Activated CD4-positive, alpha-beta memory T cell treated with anti-CD3 and anti-CD28 coated beads for 36 hours (primary cell): ENCODE measurements at regions of chr10 and their contacts with region 1.

Region 1: GRCh38 chr10:6202684-6203330 is at the start of gene PFKFB3:
- DNase-seq: peak; percentile 96
- H3K4me3 Mint-ChIP-seq: peak within 1 kb of the TSS; percentile 90
- H3K27ac Mint-ChIP-seq: peak within 1 kb of the TSS; percentile 91
- H3K4me1 Mint-ChIP-seq: peaks cover 32% of the 10 kb centered on the region
- H3K27me3 Mint-ChIP-seq: no peaks in the 10 kb centered on the region
- total RNA-seq, gene PFKFB3: 70.6 to 76.4 TPM

Region 2: DNA sequence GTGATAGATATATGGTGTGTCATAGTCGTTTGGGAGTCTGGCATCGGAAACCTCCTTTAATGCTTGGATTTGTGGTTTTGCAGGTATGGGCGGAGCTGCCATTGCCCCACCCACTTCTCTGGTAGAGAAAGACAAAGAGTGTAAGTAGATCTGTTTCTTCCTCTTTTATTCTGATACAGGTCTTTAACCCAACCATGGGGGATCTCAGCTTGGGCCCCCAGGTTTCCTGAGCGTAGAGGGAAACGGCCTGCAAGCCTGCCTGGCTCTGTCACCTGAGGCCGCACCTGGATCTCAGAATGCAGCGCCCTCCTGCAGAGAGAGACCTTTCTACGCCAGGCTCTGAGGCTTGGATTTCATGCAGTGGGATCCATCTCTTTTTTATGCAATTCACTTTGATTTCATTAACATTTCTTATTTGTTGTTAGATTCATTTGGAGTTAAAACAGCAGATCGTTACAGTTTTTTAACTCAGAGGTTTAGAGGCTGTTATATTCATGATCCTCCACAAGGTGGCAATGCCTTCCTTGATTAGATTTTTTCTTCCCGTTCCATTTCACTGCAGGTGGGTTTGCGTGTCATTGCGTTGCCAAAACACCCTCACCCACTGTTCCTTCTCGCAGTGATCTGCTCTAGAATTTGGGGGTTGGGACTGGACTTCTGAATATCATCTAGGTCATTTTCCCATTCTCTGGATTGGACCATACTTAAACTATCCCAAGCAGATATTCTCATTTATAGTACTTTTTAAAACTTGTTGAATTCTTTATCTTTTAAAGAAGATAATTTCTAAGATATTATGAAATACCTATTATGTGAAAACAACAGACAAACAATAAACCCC is 94.0 kb before region 1 on chr10:
- CTCF ChIA-PET with region 1: interaction called, 12 read pairs
- POLR2A ChIA-PET with region 1: interaction called, 3 read pairs
- intact Hi-C with region 1: loop called (anchors 2 kb)
- DNase-seq: peak; percentile 36
- H3K4me3 Mint-ChIP-seq: no peak overlapping the region
- H3K27ac Mint-ChIP-seq: peak overlapping the region; percentile 76
- H3K4me1 Mint-ChIP-seq: peaks cover 36% of the 10 kb centered on the region
- H3K27me3 Mint-ChIP-seq: no peaks in the 10 kb centered on the region

Region 3: DNA sequence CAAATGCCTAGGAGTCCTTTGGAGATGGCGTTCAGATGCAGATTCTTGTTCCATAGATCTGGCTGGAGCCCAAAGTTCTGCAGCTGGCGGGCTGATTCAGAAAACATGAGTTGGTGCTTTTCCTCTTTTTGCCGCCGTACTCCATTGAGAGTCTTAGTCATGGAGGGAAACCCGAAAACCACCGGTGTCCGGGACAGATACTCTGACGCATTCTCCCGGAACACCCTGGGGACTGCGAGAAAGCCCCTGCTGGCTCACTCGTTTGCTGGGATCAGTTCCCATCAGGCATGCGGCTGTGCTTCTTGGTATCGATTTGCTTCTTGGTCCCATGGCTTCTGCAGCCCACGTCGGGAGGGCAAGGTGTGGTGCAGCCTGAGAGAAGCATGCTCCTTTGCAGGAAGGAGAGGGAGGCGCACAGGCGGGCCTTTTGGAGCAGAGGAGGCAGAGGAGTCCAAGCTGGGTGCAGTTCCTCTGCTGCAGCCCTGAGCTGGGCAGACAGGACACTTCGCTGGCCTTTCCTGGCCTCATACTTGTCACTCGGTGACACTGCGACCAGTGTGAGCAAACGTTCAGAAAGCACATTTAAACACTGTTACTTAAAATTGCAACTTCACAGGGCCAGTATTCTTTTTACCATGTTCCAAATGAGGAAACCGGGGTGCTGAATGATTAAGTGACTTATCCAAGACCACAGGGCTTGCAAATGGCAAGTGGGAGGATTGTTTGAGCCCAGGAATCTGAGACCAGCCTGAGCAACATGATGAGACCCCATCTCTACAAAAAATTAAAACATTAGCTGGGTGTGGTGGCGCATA is 30.7 kb before region 1 on chr10:
- CTCF ChIA-PET with region 1: interaction called, 39 read pairs
- POLR2A ChIA-PET with region 1: interaction called, 8 read pairs
- intact Hi-C with region 1: loop called (anchors 2 kb)
- DNase-seq: peak; percentile 54
- H3K4me3 Mint-ChIP-seq: no peak overlapping the region
- H3K27ac Mint-ChIP-seq: peak overlapping the region; percentile 26
- H3K4me1 Mint-ChIP-seq: peaks cover 76% of the 10 kb centered on the region
- H3K27me3 Mint-ChIP-seq: no peaks in the 10 kb centered on the region

Region 4: DNA sequence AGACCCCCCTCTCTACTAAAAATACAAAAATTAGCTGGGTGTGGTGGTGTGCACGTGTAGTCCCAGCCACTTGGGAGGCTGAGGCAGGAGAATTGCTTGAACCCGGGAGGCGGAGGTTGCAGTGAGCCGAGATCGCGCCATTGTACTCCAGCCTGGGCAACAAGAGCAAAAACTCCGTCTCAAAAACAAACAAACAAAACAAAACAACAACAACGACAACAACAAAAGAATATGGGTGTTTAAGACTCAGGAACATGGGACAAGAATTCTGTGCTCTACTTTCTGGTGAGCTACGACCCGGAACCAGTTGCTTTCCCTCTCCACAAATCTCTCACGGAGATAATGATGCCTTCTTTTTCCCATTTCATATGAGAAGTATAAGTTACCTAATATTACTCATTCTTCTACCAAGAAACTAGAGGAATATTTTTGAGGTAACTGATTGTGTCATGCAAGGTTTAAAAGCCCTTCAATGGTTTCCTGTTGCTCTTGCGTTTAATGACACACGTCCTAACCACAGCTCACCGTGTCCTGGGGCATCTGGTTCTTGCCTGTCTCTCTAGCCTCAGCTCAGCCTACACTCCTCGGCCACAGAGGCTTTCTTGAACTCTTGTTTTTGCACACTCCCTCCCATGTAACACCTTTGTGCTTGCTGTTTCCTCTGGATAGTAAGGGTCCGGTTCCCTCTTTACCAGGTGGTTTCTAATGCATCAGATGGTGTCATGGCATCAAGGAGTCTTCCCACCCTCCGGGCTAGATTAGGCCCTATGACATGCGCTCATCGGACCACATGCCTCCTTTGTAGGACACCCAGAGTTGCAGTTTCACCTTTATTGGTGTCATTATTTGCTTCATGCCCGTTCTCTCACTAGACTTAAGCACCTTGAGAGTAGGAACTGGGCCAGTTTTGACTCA is 67.4 kb after region 1 on chr10:
- CTCF ChIA-PET with region 1: interaction called, 9 read pairs
- POLR2A ChIA-PET with region 1: interaction called, 11 read pairs
- intact Hi-C with region 1: loop called (anchors 1 kb)
- DNase-seq: peak; percentile 91
- H3K4me3 Mint-ChIP-seq: peak overlapping the region; percentile 35
- H3K27ac Mint-ChIP-seq: peak overlapping the region; percentile 97
- H3K4me1 Mint-ChIP-seq: peaks cover 63% of the 10 kb centered on the region
- H3K27me3 Mint-ChIP-seq: no peaks in the 10 kb centered on the region

Region 5: DNA sequence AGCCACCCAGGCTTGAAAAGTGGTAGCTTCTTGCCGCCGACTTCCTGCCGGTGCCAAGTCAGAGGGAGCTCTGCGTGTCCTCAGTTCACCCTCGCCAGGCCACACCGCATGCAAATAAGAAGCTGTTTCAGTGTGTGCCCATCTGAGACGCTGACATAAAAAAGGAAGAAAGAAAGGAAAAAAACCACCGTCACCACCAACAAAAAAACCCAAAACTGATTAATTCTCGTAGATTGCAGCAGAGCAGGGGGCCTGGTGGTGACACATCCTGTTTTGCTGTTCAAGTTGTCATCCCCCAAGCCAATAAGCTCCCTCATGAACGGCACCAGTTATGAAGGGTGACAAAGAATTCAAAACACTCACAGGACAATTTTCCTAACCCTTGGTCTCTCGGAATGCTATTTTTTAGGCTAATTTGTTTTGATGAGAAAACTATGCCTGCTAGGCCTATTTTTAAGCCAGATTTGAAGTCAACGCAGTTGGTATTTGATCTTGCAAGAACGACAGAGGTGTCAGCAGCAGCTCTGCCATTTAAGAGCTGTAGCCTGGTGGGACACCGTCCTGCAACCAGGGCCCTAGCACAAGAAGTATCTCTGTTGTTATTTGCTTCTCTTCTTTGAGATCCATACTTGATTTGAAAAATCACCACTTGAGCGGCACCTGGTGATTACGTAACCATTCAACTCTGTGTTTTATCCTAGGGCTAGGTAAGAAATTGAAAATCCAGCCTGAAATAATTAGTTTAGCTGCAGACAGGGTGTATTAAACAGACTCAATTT is 145.5 kb after region 1 on chr10:
- CTCF ChIA-PET with region 1: interaction called, 19 read pairs
- POLR2A ChIA-PET with region 1: interaction called, 20 read pairs
- intact Hi-C with region 1: loop called (anchors 1 kb)
- DNase-seq: peak; percentile 93
- H3K4me3 Mint-ChIP-seq: peak overlapping the region; percentile 73
- H3K27ac Mint-ChIP-seq: peak overlapping the region; percentile 99
- H3K4me1 Mint-ChIP-seq: peaks cover 57% of the 10 kb centered on the region
- H3K27me3 Mint-ChIP-seq: no peaks in the 10 kb centered on the region

Region 6: GRCh38 chr10:6409971-6410651 is 207.3 kb after region 1 on chr10:
- CTCF ChIA-PET with region 1: interaction called, 57 read pairs
- POLR2A ChIA-PET with region 1: interaction called, 16 read pairs
- intact Hi-C with region 1: loop called (anchors 1 kb)
- DNase-seq: peak; percentile 55
- H3K4me3 Mint-ChIP-seq: peak overlapping the region; percentile 38
- H3K27ac Mint-ChIP-seq: peak overlapping the region; percentile 84
- H3K4me1 Mint-ChIP-seq: peaks cover 56% of the 10 kb centered on the region
- H3K27me3 Mint-ChIP-seq: no peaks in the 10 kb centered on the region